Mammary epithelial cell (primary cell): ENCODE measurements at regions of chr15 and their contacts with region 1.

Region 1: GRCh38 chr15:47196057-47196456 is 521.2 kb upstream of the SEMA6D start:
- DNase-seq: peak; percentile 65
- H3K4me3 ChIP-seq: no peak overlapping the region
- H3K27ac ChIP-seq: no peak overlapping the region
- H3K4me1 ChIP-seq: no peaks in the 10 kb centered on the region
- H3K27me3 ChIP-seq: no peaks in the 10 kb centered on the region
- CTCF ChIP-seq: peak; percentile 83 to 89

Region 2: DNA sequence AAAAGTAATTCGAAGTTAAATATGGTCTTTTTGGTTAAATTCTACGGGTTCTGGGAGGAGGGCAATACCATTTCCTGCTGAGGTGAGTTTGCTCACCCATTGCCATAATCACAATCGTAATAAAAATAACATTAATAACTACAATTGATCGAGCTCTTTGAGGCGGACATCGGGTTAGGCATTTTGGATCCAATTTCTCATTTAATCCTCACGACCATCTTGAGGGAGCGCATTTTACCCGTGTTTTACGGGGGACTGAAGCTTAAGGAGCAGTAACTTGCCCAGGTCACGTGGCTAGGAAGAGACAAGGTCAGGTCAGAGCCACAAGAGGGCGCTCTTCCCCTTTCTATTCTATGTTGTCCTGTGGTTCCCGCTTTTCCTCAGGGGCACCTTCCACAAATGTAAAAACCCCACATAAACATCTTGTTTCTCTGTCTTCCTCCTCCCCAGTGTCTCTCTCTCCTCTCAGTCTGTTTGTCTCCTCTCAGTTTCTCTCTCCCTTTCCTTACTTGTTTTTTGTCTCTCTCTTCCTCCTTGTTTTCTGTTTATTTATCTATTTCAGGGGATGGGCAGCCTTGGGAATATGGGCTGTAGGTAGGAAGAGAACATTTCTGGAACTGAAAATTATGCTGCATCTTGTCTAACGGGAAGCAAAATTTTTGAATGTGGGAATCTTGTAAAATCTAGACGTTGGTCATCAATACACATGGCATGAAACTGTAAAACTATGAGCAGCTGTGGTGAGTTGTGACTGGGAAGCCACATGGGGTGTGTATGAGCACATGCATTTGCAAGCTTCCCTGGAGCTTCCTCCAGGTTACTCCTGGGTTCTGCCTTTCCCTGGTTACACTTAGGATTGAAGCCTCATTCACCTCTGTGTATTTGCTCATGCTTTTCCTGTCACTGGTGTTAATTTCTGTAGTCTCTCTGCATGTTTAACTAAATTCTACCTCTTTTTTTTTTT is 1490.3 kb before region 1 on chr15:
- CTCF ChIA-PET with region 1: no interaction called
- dilution Hi-C with region 1: no loop called
- in situ Hi-C with region 1: no loop called
- intact Hi-C with region 1: loop called (anchors 10 kb)
- DNase-seq: peak; percentile 70
- H3K4me3 ChIP-seq: peak overlapping the region; percentile 48 to 60 (median 53)
- H3K27ac ChIP-seq: peak overlapping the region; percentile 0
- H3K4me1 ChIP-seq: peaks cover 9% of the 10 kb centered on the region
- H3K27me3 ChIP-seq: no peaks in the 10 kb centered on the region
- CTCF ChIP-seq: peak; percentile 67 to 85

Region 3: GRCh38 chr15:46556559-46557379 is 639.3 kb before region 1 on chr15:
- CTCF ChIA-PET with region 1: no interaction called
- dilution Hi-C with region 1: no loop called
- in situ Hi-C with region 1: no loop called
- intact Hi-C with region 1: no loop called
- DNase-seq: no peak
- H3K4me3 ChIP-seq: no peak overlapping the region
- H3K27ac ChIP-seq: no peak overlapping the region
- H3K4me1 ChIP-seq: no peaks in the 10 kb centered on the region
- H3K27me3 ChIP-seq: no peaks in the 10 kb centered on the region
- CTCF ChIP-seq: no peak

Region 4: GRCh38 chr15:47184003-47184907 is 11.8 kb before region 1 on chr15:
- CTCF ChIA-PET with region 1: no interaction called
- dilution Hi-C with region 1: no loop called
- in situ Hi-C with region 1: no loop called
- intact Hi-C with region 1: no loop called
- DNase-seq: peak; percentile 31
- H3K4me3 ChIP-seq: peak overlapping the region; percentile 4 to 31 (median 21)
- H3K27ac ChIP-seq: no peak overlapping the region
- H3K4me1 ChIP-seq: peaks cover 9% of the 10 kb centered on the region
- H3K27me3 ChIP-seq: peaks cover 26% of the 10 kb centered on the region
- CTCF ChIP-seq: no peak

Region 5: DNA sequence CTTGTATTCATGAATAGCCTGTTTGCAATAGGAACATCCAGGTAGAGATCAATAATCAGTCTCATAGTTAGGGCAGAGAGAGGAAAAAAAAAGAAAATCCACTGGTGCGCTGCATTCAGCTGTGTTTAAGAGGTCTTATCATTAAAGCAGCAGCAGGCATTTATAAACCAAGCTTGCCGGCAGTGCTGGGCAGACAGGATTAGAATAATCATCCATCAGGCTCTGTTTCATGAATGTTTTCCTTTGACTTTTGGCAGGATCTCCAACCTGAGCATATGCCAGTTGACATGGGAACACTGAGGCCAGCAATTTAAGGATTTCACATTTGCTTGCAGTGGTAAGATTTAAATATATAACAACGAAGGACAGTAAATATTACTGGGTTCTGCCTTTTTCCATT is 216.1 kb after region 1 on chr15:
- CTCF ChIA-PET with region 1: no interaction called
- dilution Hi-C with region 1: no loop called
- in situ Hi-C with region 1: no loop called
- intact Hi-C with region 1: no loop called
- DNase-seq: no peak
- H3K4me3 ChIP-seq: no peak overlapping the region
- H3K27ac ChIP-seq: no peak overlapping the region
- H3K4me1 ChIP-seq: peaks cover 3% of the 10 kb centered on the region
- H3K27me3 ChIP-seq: no peaks in the 10 kb centered on the region
- CTCF ChIP-seq: no peak

Region 6: DNA sequence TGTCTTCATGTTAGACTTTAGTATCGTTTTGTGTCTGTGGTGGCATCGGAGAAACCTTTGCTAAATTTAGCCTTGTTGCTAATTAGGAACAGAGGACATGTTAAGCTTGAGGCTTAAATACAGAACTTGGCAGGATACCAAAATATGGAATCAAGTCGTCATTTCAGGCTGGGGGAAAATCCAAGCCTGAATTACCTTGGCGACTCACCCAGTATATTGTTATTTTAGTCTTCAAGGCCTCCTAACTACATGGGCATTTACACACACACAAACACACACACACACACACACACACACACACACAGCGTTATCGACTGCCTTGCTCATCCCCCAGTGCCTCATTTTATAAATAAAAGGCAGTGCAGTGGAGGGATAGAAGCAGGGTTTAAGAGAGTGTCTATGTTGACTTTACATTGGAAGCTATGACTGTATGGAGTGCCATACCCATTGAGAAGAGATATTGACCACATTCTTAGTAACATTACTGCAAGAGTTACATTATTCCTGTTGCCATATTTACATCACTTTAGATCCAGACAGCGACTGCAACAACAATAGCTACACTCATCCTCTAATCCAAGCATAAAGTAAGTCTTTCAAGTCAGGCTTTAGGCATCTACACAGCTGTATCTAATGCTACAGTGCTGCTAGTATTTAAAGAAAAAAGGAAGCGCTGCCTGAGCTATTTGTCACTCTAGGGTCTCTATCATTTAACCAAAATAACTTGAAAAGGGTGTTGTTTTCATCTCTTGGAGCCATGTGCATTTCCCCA is 310.5 kb after region 1 on chr15:
- CTCF ChIA-PET with region 1: no interaction called
- dilution Hi-C with region 1: no loop called
- in situ Hi-C with region 1: no loop called
- intact Hi-C with region 1: loop called (anchors 5 kb)
- DNase-seq: no peak
- H3K4me3 ChIP-seq: no peak overlapping the region
- H3K27ac ChIP-seq: no peak overlapping the region
- H3K4me1 ChIP-seq: no peaks in the 10 kb centered on the region
- H3K27me3 ChIP-seq: no peaks in the 10 kb centered on the region
- CTCF ChIP-seq: no peak

Region 7: GRCh38 chr15:47711654-47712053 is 515.6 kb after region 1 on chr15:
- CTCF ChIA-PET with region 1: interaction called, 5 read pairs
- dilution Hi-C with region 1: no loop called
- in situ Hi-C with region 1: no loop called
- intact Hi-C with region 1: loop called (anchors 1 kb)
- DNase-seq: peak; percentile 5
- H3K4me3 ChIP-seq: no peak overlapping the region
- H3K27ac ChIP-seq: no peak overlapping the region
- H3K4me1 ChIP-seq: no peaks in the 10 kb centered on the region
- H3K27me3 ChIP-seq: no peaks in the 10 kb centered on the region
- CTCF ChIP-seq: peak; percentile 58 to 72

Region 8: GRCh38 chr15:48084759-48085590 is 888.9 kb after region 1 on chr15:
- CTCF ChIA-PET with region 1: interaction called, 19 read pairs
- dilution Hi-C with region 1: no loop called
- in situ Hi-C with region 1: no loop called
- intact Hi-C with region 1: loop called (anchors 5 kb)
- DNase-seq: peak; percentile 6
- H3K4me3 ChIP-seq: no peak overlapping the region
- H3K27ac ChIP-seq: no peak overlapping the region
- H3K4me1 ChIP-seq: no peaks in the 10 kb centered on the region
- H3K27me3 ChIP-seq: no peaks in the 10 kb centered on the region
- CTCF ChIP-seq: peak; percentile 39 to 73

Region 9: GRCh38 chr15:48352474-48353072 is 1156.5 kb after region 1 on chr15:
- CTCF ChIA-PET with region 1: no interaction called
- dilution Hi-C with region 1: no loop called
- in situ Hi-C with region 1: no loop called
- intact Hi-C with region 1: loop called (anchors 1 kb)
- DNase-seq: peak; percentile 47
- H3K4me3 ChIP-seq: no peak overlapping the region
- H3K27ac ChIP-seq: no peak overlapping the region
- H3K4me1 ChIP-seq: no peaks in the 10 kb centered on the region
- H3K27me3 ChIP-seq: no peaks in the 10 kb centered on the region
- CTCF ChIP-seq: peak; percentile 78 to 84